PC-9 (cell line): ENCODE measurements at regions of chr11 and their contacts with region 1.

Region 1: DNA sequence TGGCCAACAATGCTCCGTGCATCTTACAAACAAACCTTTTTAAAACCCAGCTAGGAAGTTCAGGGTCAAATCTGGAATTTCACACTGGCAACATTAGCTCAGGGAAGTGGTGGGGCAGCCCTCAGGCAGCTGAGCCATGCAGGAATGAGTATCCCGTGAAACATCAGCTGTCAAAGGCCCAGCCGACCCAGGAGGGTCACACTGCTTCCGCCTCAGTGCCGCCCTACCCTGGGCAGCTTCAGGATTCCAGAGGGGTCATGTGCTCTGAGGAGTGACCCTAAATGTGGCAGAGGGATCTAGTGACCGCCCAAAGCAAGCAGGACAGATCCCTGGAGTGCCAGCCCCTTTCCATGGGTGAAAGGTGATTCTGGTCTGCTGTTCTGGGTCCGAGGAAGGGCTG is 73.4 kb downstream of the LINC01488 start:
- DNase-seq: no peak
- H3K4me3 ChIP-seq: no peak overlapping the region
- H3K27ac ChIP-seq: no peak overlapping the region
- H3K4me1 ChIP-seq: no peaks in the 10 kb centered on the region
- H3K27me3 ChIP-seq: no peaks in the 10 kb centered on the region
- CTCF ChIP-seq: no peak

Region 2: DNA sequence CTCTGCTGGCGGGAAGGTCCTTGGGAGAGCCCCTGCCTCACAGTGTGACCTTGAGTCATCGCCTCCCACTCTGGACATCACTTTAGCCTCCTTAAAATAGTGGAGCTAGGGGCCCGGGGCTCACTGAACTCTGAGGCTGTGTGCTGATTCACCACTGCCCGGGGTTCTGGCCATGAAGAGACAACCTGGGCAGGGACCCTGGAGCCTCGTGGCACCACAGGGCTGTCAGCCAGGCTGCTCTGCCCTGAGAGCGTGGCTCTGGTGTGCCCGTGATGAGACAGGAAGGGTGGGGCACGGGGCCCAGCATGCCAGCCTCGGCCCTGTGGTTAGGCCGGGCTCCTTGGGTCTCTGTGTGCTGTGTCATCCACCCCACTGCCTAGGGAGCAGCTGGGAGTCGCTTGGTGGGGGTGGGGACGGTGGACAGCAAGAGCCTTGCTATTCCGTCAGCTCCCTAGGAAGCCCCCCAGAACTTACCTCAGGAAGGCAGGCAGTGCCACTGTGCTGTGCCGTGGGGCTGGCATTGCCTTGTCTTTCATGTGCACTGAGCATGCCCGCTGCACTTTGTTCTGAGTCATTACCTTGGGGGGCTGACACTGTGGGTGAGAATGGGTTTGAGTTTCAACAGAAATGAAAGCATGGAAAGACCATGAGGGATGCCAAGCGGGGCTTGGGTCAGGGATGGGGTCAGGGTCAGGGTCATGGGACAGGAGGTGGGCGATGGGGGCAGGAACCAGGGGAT is 474.5 kb before region 1 on chr11:
- CTCF ChIA-PET with region 1: no interaction called
- POLR2A ChIA-PET with region 1: no interaction called
- intact Hi-C with region 1: no loop called
- DNase-seq: peak; percentile 51 to 82
- H3K4me3 ChIP-seq: no peak overlapping the region
- H3K27ac ChIP-seq: no peak overlapping the region
- H3K4me1 ChIP-seq: peaks cover 13% of the 10 kb centered on the region
- H3K27me3 ChIP-seq: no peaks in the 10 kb centered on the region
- CTCF ChIP-seq: no peak

Region 3: GRCh38 chr11:69274531-69275255 is 280.2 kb before region 1 on chr11:
- CTCF ChIA-PET with region 1: no interaction called
- POLR2A ChIA-PET with region 1: no interaction called
- intact Hi-C with region 1: no loop called
- DNase-seq: peak; percentile 95 to 99
- H3K4me3 ChIP-seq: no peak overlapping the region
- H3K27ac ChIP-seq: peak overlapping the region; percentile 90
- H3K4me1 ChIP-seq: peaks cover 65% of the 10 kb centered on the region
- H3K27me3 ChIP-seq: no peaks in the 10 kb centered on the region
- CTCF ChIP-seq: no peak

Region 4: GRCh38 chr11:69479591-69480391 is 75.1 kb before region 1 on chr11:
- CTCF ChIA-PET with region 1: no interaction called
- POLR2A ChIA-PET with region 1: interaction called, 17 read pairs
- intact Hi-C with region 1: no loop called
- DNase-seq: peak in 1 of 2 experiments; percentile 75
- H3K4me3 ChIP-seq: no peak overlapping the region
- H3K27ac ChIP-seq: no peak overlapping the region
- H3K4me1 ChIP-seq: peaks cover 14% of the 10 kb centered on the region
- H3K27me3 ChIP-seq: peaks cover 7% of the 10 kb centered on the region; the same call in 1 of the 2 replicates
- CTCF ChIP-seq: no peak